Left ventricle myocardium superior (tissue), 1 donor: ENCODE measurements at regions of chr11 and their contacts with region 1.

Region 1: GRCh38 chr11:10405855-10406592 is 49.0 kb upstream of the AMPD3 start:
- DNase-seq: peak; percentile 46
- ATAC-seq: peak; percentile 91

Region 2: GRCh38 chr11:10514210-10514609 is 108.2 kb after region 1 on chr11:
- intact Hi-C with region 1: loop called (anchors 10 kb)
- DNase-seq: no peak
- ATAC-seq: no peak